ENCODE measurements at regions of chr19 and their contacts with region 1.

Region 1: DNA sequence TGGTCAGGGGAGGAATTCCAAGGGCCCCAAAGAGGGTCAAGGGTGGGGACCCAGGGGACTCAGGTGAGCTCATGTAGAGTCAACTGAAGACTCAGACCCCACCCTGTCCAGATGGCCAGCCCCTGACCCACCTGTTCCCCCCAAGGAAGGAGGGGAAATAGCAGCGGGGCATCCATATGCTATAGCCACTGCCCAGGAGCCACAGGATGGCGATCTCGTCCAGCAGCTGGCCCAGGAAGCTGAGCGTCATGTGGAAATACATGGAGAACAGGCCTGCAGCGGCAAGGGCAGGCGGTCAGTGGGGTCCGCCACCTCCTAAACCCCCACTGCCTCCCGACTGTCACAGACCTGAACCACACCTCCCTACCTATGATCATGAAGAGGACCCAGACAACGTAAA is 21.4 kb downstream of the ACER1 start:
- DNase-seq: no peak
- H3K4me3 ChIP-seq: no peak overlapping the region
- H3K27ac ChIP-seq: no peak overlapping the region
- H3K4me1 ChIP-seq: no peaks in the 10 kb centered on the region
- H3K27me3 ChIP-seq: no peaks in the 10 kb centered on the region
- CTCF ChIP-seq: no peak; the same call in 1 of the 2 replicates

Region 2: GRCh38 chr19:6161271-6161850 is 150.7 kb before region 1 on chr19:
- CTCF ChIA-PET with region 1: no interaction called
- POLR2A ChIA-PET with region 1: no interaction called
- intact Hi-C with region 1: loop called (anchors 10 kb)
- DNase-seq: peak; percentile 83
- H3K4me3 ChIP-seq: no peak overlapping the region
- H3K27ac ChIP-seq: no peak overlapping the region
- H3K4me1 ChIP-seq: no peaks in the 10 kb centered on the region
- H3K27me3 ChIP-seq: no peaks in the 10 kb centered on the region
- CTCF ChIP-seq: no peak

Measured in A673 (cell line).